ENCODE measurements at regions of chr9 and their contacts with region 1.

Region 1: DNA sequence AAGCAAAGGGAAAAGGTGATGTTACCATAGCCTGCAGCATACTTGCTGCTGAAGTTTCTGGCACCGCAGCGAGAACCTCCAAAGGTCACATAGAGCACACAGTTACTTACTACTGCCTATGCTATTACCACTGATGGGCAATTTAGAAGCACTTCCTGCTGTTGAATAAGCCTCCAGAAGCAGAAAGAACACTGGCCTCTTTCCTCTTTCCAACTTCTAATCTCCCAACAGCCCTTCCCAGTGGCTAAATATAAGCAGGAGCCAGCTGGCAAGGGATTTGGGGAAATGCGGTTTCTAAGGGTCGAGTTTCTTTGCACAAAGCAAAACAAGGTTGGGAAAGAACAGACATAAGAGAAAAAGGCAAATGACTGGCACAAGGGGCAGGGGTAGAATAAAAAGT is 669.2 kb upstream of the ACO1 start:
- DNase-seq: no peak
- H3K4me3 ChIP-seq: no peak overlapping the region
- H3K27ac ChIP-seq: no peak overlapping the region
- H3K4me1 ChIP-seq: no peaks in the 10 kb centered on the region
- H3K27me3 ChIP-seq: no peaks in the 10 kb centered on the region
- CTCF ChIP-seq: no peak

Region 2: DNA sequence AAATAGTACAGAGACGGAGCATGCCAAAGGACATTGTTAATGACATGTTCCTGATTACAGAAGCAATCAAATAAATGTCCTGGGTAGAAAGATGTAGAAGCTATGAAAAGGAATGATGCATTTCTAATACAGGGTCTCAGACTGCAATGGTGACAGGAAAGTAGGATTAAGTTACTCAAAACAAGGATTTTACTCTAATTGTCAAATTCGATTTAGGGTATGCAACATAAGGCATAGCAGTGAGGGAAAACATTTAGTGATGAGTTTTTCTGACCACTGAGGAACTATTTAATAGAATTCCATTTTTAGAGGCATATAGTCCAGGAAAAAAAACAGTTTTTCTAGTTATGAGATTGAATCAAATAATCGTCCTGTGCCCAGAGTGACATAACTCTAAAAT is 45.9 kb before region 1 on chr9:
- CTCF ChIA-PET with region 1: no interaction called
- POLR2A ChIA-PET with region 1: no interaction called
- intact Hi-C with region 1: loop called (anchors 10 kb)
- DNase-seq: no peak
- H3K4me3 ChIP-seq: no peak overlapping the region
- H3K27ac ChIP-seq: no peak overlapping the region
- H3K4me1 ChIP-seq: no peaks in the 10 kb centered on the region
- H3K27me3 ChIP-seq: no peaks in the 10 kb centered on the region
- CTCF ChIP-seq: no peak

Measured in A673 (cell line).